ENCODE measurements at regions of chr2 and their contacts with region 1.

Region 1: DNA sequence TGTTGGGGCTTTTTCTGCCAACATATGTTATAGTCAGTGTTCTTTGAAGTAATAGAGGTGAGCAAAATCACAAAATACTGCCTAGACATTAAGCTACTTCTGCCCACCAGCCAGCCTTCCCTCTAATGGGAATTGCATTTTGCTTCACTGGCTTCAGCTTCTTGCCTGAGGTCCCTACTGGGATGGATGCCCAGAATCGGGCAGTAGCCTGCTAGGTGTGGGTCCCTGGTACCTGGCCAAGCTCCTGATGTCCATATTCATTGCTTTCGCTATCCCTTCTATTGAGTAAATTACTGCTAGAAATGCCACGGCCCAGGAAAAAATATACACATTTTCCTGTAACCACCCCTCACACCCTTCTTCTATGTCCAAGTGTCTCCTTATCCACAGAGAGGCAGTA is 27.0 kb downstream of the CRYGD start:
- DNase-seq: no peak
- ATAC-seq: no peak
- H3K4me3 ChIP-seq: no peak overlapping the region
- H3K4me3 Mint-ChIP-seq: no peak overlapping the region
- H3K27ac ChIP-seq: no peak overlapping the region
- H3K27ac Mint-ChIP-seq: no peak overlapping the region
- H3K4me1 ChIP-seq: peaks cover 0 to 2% of the 10 kb centered on the region in 2 experiments
- H3K4me1 Mint-ChIP-seq: peaks cover 23 to 29% (median 26%) of the 10 kb centered on the region in 3 donors
- H3K27me3 ChIP-seq: peaks cover 0 to 2% of the 10 kb centered on the region in 2 experiments
- H3K27me3 Mint-ChIP-seq: peaks cover 0 to 5% of the 10 kb centered on the region in 2 donors

Region 2: DNA sequence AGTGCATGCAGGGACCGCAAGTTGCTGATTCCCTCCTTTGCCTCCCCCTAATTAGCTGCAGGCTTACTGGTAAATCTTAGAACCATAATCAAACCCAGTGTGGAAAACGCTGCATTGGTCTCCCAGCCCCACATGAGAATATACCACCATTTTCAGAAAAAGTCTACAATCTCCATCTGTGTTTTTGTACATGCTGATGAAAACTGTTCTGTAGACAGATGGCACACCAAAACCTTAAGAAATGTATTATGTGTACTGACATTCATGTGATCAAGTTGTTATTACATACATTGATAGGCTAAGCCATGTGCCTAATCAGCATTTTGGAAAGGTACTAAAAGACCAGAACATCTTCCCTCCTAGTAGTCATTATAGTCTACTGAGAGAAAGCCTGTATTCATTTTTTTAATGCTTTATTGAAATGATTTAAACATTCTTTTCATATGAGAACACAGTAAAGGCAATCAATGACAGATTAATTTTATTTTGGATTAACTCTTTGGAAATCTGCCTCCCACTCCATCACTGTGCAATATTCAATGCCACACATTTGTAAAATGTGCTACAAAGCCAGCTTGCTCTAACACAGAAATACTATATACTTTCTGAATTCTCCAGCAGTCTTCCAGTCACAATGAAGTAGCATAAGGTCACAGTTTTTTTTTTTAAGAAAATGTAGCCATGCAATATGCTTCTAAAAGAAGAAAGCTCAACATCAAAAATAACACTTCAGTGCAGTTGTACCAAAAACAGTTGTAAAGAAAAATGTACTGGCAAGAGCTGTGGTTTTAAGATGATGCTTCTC is 67.8 kb after region 1 on chr2:
- CTCF ChIA-PET with region 1: no interaction called
- POLR2A ChIA-PET with region 1: interaction called in 1 of 2 experiments, 11 read pairs
- DNase-seq: no peak
- ATAC-seq: no peak
- H3K4me3 ChIP-seq: no peak overlapping the region
- H3K4me3 Mint-ChIP-seq: no peak overlapping the region
- H3K27ac ChIP-seq: no peak overlapping the region
- H3K27ac Mint-ChIP-seq: no peak overlapping the region
- H3K4me1 ChIP-seq: no peaks in the 10 kb centered on the region
- H3K4me1 Mint-ChIP-seq: no peaks in the 10 kb centered on the region
- H3K27me3 ChIP-seq: peaks cover 0 to 12% of the 10 kb centered on the region in 2 experiments
- H3K27me3 Mint-ChIP-seq: peaks cover 6 to 9% of the 10 kb centered on the region in 2 donors

Measured in T-cell (primary cell).